Endothelial cell of umbilical vein (primary cell): ENCODE measurements at regions of chr1 and their contacts with region 1.

Region 1: GRCh38 chr1:228405987-228406265 is 709 bp downstream of the TRIM11 start:
- DNase-seq: no peak
- H3K4me3 ChIP-seq: peak overlapping the region; percentile 70 to 96 (median 73)
- H3K27ac ChIP-seq: no peak overlapping the region
- H3K4me1 ChIP-seq: peaks cover 23% of the 10 kb centered on the region
- H3K27me3 ChIP-seq: no peaks in the 10 kb centered on the region
- CTCF ChIP-seq: no peak
- POLR2A ChIP-seq: no peak

Region 2: DNA sequence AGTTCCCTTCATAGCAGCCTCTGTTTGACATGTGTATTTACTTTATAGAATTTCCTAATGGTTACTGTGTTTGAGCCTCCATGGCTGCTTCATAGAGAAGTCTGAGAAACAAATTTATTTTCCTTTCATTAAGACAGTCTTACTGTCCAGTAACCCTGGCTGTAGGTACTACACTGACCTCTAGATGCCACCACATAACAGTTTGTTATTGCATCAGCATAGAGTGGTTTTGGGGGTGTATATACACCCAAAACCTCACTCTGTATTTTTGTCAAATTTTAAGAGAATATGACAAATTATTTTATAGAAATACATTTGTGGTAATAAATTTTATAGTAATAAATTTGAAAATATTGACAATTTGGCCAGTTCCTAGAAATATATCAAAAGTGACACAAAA is 140.8 kb before region 1 on chr1:
- CTCF ChIA-PET with region 1: interaction called, 3 read pairs
- POLR2A ChIA-PET with region 1: no interaction called
- dilution Hi-C with region 1: no loop called
- intact Hi-C with region 1: loop called (anchors 1 kb)
- DNase-seq: peak; percentile 36
- H3K4me3 ChIP-seq: no peak overlapping the region
- H3K27ac ChIP-seq: no peak overlapping the region
- H3K4me1 ChIP-seq: peaks cover under 1% of the 10 kb centered on the region
- H3K27me3 ChIP-seq: no peaks in the 10 kb centered on the region
- CTCF ChIP-seq: peak; percentile 13 to 21
- POLR2A ChIP-seq: no peak

Region 3: DNA sequence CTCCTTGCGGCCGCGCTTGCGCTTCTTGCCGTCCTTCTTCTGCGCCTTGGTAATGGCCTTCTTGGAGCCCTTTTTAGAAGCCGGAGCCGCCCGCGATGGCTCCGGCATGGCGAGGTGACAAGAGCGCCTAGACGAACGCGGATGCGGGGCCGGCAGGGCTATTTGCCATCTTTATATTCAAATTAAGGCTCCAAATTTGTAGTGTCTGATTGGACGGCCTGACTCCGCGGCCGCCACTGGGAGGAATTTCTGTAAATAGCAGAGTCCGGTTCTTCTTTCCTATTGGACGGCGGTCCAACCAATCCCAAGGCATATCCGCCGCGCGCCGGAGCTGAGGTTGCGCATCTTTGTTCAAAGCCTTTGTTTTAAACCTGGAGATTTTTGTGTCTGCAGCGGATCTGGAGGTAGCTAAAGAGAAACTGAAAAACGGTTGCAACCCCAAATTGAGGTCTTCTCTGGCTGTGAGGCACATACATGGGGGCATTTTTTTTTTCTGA is 58.6 kb after region 1 on chr1:
- CTCF ChIA-PET with region 1: no interaction called
- POLR2A ChIA-PET with region 1: no interaction called
- dilution Hi-C with region 1: no loop called
- intact Hi-C with region 1: loop called (anchors 2 kb)
- DNase-seq: peak; percentile 81
- H3K4me3 ChIP-seq: peak overlapping the region in 2 of 3 experiments; percentile 22 to 68
- H3K27ac ChIP-seq: no peak overlapping the region
- H3K4me1 ChIP-seq: peaks cover 6% of the 10 kb centered on the region
- H3K27me3 ChIP-seq: peaks cover 55 to 70% of the 10 kb centered on the region in 2 experiments
- CTCF ChIP-seq: no peak
- POLR2A ChIP-seq: no peak

Region 4: DNA sequence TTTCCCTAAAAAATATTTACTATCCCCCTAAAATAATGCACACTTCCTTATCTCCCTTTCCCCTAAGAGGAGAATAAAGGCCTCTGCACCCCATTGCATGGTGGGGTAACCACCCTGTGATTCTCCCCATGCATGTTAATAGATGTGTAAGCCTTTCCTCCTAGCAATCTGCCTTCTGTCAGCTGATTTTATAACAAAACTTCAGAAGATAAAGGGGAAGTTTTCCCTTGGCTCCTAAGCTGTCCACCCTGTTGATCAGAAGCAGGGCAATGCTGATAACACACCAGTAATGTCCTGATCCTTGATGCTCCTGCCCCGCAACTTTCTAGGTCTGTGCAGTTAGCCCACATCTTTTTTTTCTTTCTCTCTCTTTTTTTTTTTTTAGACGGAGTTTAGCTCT is 69.9 kb after region 1 on chr1:
- CTCF ChIA-PET with region 1: no interaction called
- POLR2A ChIA-PET with region 1: no interaction called
- dilution Hi-C with region 1: no loop called
- intact Hi-C with region 1: no loop called
- DNase-seq: no peak
- H3K4me3 ChIP-seq: no peak overlapping the region
- H3K27ac ChIP-seq: no peak overlapping the region
- H3K4me1 ChIP-seq: peaks cover 24% of the 10 kb centered on the region
- H3K27me3 ChIP-seq: peaks cover 0 to under 1% of the 10 kb centered on the region in 2 experiments
- CTCF ChIP-seq: no peak
- POLR2A ChIP-seq: no peak

Region 5: DNA sequence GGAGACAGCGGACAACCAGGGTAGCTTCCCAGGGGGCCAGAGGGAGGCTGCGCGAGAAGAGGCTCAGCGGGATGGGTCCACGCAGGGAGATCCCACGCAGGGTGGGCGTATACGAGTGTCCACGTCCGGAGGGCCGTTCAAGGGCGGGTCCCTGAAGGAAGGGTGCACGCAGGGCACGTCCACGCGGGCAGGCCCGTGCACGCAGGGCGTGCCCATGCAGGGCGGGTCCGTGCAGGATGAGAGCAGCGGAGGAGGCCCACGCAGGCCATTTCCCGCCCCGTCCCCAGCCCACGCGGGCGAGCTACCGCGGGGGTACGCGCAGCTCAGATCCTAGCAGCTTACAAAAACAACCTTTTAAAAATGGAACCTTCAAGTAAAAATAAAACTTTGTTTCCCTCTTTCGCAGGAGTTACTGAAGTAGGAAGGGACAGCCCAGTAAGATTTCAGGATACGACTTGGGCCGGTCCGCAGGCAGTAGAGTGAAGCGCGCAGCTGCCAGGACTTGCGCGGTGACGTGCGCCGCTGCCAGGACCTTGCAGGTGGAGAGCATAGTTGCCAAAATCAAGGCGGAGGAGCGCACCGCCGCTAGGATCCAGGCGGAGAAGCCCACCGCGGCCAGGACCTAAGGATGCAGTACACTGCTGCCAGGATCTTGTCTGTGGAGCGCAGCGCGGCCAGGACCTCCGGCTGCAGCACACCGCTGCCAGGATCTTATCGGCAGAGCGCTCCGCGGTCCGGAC is 80.8 kb after region 1 on chr1:
- CTCF ChIA-PET with region 1: no interaction called
- POLR2A ChIA-PET with region 1: no interaction called
- dilution Hi-C with region 1: no loop called
- intact Hi-C with region 1: loop called (anchors 1 kb)
- DNase-seq: peak; percentile 94
- H3K4me3 ChIP-seq: peak overlapping the region; percentile 4 to 79 (median 46)
- H3K27ac ChIP-seq: peak overlapping the region; percentile 72
- H3K4me1 ChIP-seq: no peaks in the 10 kb centered on the region
- H3K27me3 ChIP-seq: no peaks in the 10 kb centered on the region
- CTCF ChIP-seq: no peak
- POLR2A ChIP-seq: peak; percentile 65